Transverse colon (tissue), 4 donors: ENCODE measurements at regions of chr13 and their contacts with region 1.

Region 1: GRCh38 chr13:73473016-73473415 is 414.2 kb downstream of the KLF5 start:
- DNase-seq: no peak
- H3K4me3 ChIP-seq: no peak overlapping the region
- H3K27ac ChIP-seq: no peak overlapping the region
- H3K4me1 ChIP-seq: no peaks in the 10 kb centered on the region
- H3K27me3 ChIP-seq: no peaks in the 10 kb centered on the region
- CTCF ChIP-seq: no peak
- EP300 ChIP-seq: no peak
- POLR2A ChIP-seq: no peak

Region 2: DNA sequence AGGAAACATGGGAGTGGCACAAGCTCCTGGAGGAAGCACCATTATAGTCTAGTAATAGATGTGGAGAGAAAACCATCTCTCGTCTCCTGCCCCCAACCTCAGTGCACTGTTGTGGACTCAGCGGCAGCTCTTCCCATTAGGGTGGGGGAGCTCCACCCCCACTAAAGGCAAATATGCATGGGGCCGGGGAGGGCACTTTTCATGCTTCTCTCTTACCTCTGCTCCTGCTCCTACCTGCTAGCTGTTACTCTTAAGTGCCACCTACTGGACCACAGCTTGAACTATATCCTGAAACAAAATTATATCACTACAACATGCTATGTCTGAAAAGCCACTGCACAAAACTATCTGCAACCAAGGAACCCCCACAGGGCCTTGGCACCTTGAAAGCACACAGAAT is 1493.4 kb before region 1 on chr13:
- in situ Hi-C with region 1: no loop called
- intact Hi-C with region 1: loop called (anchors 5 kb)
- DNase-seq: no peak
- H3K4me3 ChIP-seq: no peak overlapping the region
- H3K27ac ChIP-seq: no peak overlapping the region
- H3K4me1 ChIP-seq: no peaks in the 10 kb centered on the region
- H3K27me3 ChIP-seq: no peaks in the 10 kb centered on the region
- CTCF ChIP-seq: peak in 3 of 5 experiments; percentile 16 to 26 (median 21)
- EP300 ChIP-seq: no peak
- POLR2A ChIP-seq: no peak

Region 3: DNA sequence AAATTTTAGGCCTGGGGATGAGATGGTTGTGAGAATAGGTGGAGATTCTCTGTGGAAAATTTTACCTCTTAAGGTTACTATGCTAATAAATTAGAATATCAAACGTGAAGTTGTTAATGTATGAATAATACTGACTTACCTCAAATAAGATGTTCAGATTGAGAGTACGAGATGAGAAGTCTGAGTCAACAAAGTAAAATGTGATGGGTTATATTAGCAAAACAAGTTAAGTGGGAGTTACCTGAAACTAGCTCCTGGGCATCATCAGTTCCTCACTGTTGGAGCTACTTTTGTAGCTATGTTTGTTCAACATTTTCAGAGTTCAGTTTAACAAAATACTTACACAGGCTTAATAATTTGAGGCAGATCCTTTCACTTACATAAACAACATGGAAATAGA is 582.5 kb before region 1 on chr13:
- in situ Hi-C with region 1: no loop called
- intact Hi-C with region 1: no loop called
- DNase-seq: no peak
- H3K4me3 ChIP-seq: no peak overlapping the region
- H3K27ac ChIP-seq: no peak overlapping the region
- H3K4me1 ChIP-seq: peaks cover 0 to 12% (median 2%) of the 10 kb centered on the region in 4 donors
- H3K27me3 ChIP-seq: no peaks in the 10 kb centered on the region
- CTCF ChIP-seq: no peak
- EP300 ChIP-seq: no peak
- POLR2A ChIP-seq: no peak

Region 4: GRCh38 chr13:73215807-73216206 is 257.2 kb before region 1 on chr13:
- in situ Hi-C with region 1: no loop called
- intact Hi-C with region 1: no loop called
- DNase-seq: peak; percentile 26
- H3K4me3 ChIP-seq: no peak overlapping the region
- H3K27ac ChIP-seq: peak overlapping the region in 3 of 4 donors; percentile 42 to 54 (median 43)
- H3K4me1 ChIP-seq: peaks cover 4 to 15% (median 8%) of the 10 kb centered on the region in 4 donors
- H3K27me3 ChIP-seq: no peaks in the 10 kb centered on the region
- CTCF ChIP-seq: no peak
- EP300 ChIP-seq: no peak
- POLR2A ChIP-seq: no peak

Region 5: GRCh38 chr13:73492811-73493210 is 19.8 kb after region 1 on chr13:
- in situ Hi-C with region 1: no loop called
- intact Hi-C with region 1: no loop called
- DNase-seq: no peak
- H3K4me3 ChIP-seq: no peak overlapping the region
- H3K27ac ChIP-seq: no peak overlapping the region
- H3K4me1 ChIP-seq: no peaks in the 10 kb centered on the region
- H3K27me3 ChIP-seq: no peaks in the 10 kb centered on the region
- CTCF ChIP-seq: no peak
- EP300 ChIP-seq: no peak
- POLR2A ChIP-seq: no peak

Region 6: DNA sequence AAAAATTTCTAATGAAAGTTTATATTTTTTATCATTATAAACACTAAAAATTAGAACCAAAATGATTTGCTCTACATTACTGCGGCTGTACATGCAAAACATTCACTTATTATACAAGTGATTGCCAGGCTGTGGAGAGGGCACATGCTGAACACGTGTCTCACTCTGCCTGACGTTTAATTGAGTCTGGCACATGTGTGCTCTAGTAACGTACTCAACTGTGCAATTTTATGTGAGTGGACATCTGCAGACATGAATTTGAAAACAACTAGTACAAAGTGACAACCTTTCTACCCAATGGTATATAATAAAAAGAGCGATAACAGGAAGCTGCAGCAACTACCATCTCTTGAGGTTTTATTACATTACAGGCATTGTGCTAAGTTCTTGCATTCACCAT is 319.8 kb after region 1 on chr13:
- in situ Hi-C with region 1: no loop called
- intact Hi-C with region 1: no loop called
- DNase-seq: no peak
- H3K4me3 ChIP-seq: no peak overlapping the region
- H3K27ac ChIP-seq: no peak overlapping the region
- H3K4me1 ChIP-seq: peaks cover 0 to 14% (median 3%) of the 10 kb centered on the region in 4 donors
- H3K27me3 ChIP-seq: no peaks in the 10 kb centered on the region
- CTCF ChIP-seq: no peak
- EP300 ChIP-seq: no peak
- POLR2A ChIP-seq: no peak